ENCODE measurements at regions of chr1 and their contacts with region 1.

Region 1: DNA sequence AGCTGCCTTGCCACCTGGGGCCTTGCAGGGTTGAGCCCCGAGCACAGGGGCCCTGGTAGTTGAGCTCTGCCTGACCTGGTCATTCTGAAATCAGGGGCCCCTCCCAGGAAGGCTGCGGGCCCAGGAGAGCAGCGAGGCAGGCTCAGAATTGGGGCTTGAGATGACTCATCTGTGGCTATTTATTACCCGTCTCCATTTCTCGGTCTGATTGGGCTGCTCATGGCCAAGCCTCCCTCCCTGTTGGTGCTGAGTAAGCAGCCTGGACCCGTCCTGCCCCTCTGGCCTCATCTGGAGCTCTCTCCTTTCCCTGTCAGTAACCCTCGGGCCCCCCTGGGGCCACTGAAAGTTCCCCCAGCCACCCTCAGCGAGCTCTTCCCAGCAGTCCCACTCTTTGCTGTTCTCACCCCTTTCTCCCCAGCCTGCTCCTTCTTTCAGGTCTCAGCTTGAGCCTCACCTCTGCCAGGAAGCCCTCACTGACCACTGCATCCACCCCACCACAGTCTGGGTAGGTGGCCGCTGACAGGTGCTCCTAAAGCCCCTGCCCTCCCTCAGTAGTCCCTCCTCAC is 11.0 kb upstream of the TNFRSF8 start:
- DNase-seq: peak; percentile 45
- ATAC-seq: peak; percentile 84
- H3K4me3 Mint-ChIP-seq: peak overlapping the region; percentile 57
- H3K27ac Mint-ChIP-seq: peak overlapping the region; percentile 77
- H3K4me1 Mint-ChIP-seq: peaks cover 26% of the 10 kb centered on the region
- H3K27me3 Mint-ChIP-seq: no peaks in the 10 kb centered on the region
- CTCF ChIP-seq: no peak

Region 2: DNA sequence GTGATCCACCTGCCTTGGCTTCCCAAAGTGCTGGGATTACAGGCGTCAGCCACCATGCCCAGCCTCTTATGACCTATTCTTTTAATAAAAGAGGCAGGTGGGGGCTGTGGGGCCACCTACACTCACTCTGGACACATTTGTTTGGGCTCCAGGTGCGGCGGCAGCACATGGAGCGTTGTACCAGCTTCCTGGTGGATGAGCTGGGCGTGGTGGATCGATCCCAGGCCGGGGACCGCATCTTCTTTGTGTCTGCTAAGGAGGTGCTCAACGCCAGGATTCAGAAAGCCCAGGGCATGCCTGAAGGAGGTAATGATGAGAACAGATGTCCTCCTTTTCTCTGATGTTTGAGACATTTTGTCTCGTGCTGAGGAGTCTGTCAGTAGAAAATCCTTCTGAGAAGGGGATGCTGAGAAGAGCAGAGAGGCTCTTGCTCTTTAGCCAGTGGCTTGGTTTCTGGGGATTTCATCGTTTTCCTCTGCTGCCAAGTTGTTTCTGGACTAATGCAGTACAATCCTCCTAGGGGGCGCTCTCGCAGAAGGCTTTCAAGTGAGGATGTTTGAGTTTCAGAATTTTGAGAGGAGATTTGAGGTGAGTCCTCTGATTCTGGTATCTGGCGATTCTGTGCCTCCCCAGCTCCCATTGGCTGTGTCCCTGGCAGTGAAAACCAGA is 50.7 kb before region 1 on chr1:
- CTCF ChIA-PET with region 1: no interaction called
- POLR2A ChIA-PET with region 1: interaction called, 4 read pairs
- intact Hi-C with region 1: loop called (anchors 5 kb)
- DNase-seq: no peak
- ATAC-seq: no peak
- H3K4me3 Mint-ChIP-seq: no peak overlapping the region
- H3K27ac Mint-ChIP-seq: no peak overlapping the region
- H3K4me1 Mint-ChIP-seq: peaks cover 11% of the 10 kb centered on the region
- H3K27me3 Mint-ChIP-seq: no peaks in the 10 kb centered on the region
- CTCF ChIP-seq: no peak

Region 3: DNA sequence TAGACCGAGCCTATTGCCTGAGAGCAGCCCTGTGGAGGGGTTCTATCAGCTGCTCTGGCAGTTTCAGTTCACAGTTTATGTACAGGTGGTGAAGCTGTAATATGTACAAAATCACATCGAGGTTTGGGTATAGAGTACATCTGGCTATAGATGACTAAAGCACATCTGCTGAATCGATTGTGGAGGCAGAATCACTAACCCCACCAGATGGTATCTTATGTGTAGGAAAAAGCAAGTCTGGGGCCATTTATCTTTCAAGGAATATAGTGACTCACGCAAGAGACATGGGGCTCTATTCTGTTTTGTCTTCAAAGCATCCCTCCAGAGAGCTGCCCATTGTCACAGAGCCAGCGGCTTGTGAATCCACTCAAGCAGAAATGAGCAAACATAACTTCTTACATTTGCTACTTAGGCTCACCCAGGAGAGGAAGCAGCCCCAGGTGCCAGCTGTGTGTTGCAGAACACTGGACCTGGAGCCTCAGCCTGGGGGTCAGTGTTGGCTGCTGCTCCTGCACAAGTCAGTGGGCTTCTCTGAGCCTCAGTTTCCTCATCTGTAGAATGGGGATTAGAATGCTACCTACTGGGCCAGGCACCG is 11.5 kb before region 1 on chr1:
- CTCF ChIA-PET with region 1: interaction called, 4 read pairs
- POLR2A ChIA-PET with region 1: interaction called, 41 read pairs
- intact Hi-C with region 1: loop called (anchors 1 kb)
- DNase-seq: no peak
- ATAC-seq: peak; percentile 85
- H3K4me3 Mint-ChIP-seq: peak overlapping the region; percentile 73
- H3K27ac Mint-ChIP-seq: peak overlapping the region; percentile 88
- H3K4me1 Mint-ChIP-seq: peaks cover 48% of the 10 kb centered on the region
- H3K27me3 Mint-ChIP-seq: no peaks in the 10 kb centered on the region
- CTCF ChIP-seq: no peak

Region 4: DNA sequence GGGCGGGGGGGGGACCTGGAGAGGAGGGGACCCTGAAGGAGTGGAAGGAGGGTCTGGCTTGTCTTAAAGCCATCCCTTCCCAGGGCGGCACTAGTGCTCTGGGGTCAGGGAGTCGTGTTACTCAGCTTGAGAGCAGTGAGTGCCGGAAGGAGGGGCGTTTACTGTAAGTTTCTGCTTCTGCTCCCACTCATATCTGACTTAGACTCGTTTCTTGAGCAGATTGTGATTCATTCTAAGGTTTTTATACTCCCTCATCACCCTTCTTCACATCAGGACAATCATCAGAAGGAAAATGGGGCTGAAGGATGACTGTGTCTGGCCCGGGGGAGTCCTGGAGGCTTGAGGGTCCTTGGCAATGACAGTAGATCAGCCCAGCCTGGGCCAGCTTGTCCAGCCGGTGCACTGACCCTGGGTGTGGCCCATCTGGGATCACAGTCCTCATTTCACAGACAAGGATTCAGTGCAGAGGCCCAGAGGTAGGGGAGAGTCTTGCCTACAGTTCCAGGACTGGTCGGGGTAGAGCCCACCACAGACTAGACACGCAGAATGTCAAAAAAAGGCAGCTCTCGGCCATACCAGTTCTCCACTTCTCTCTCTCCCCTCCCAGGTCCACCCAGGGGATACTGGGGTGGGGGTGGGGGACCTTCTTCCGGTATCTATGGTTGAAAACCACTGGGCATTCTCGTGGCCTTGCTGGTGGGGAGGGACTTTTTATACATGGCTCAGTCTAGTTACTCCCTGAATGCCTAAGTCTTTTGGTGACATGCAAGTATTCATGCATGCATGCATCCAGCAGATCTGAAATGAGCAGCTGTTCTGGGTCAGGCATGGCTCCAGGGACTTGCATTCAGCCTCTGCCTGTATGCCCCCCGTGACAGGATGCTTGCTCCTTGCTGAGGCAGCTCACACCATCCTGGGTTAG is 16.1 kb after region 1 on chr1:
- CTCF ChIA-PET with region 1: no interaction called
- POLR2A ChIA-PET with region 1: interaction called, 12 read pairs
- intact Hi-C with region 1: no loop called
- DNase-seq: no peak
- ATAC-seq: peak; percentile 48
- H3K4me3 Mint-ChIP-seq: peak overlapping the region; percentile 7
- H3K27ac Mint-ChIP-seq: no peak overlapping the region
- H3K4me1 Mint-ChIP-seq: peaks cover 37% of the 10 kb centered on the region
- H3K27me3 Mint-ChIP-seq: peaks cover 38% of the 10 kb centered on the region
- CTCF ChIP-seq: no peak

Region 5: DNA sequence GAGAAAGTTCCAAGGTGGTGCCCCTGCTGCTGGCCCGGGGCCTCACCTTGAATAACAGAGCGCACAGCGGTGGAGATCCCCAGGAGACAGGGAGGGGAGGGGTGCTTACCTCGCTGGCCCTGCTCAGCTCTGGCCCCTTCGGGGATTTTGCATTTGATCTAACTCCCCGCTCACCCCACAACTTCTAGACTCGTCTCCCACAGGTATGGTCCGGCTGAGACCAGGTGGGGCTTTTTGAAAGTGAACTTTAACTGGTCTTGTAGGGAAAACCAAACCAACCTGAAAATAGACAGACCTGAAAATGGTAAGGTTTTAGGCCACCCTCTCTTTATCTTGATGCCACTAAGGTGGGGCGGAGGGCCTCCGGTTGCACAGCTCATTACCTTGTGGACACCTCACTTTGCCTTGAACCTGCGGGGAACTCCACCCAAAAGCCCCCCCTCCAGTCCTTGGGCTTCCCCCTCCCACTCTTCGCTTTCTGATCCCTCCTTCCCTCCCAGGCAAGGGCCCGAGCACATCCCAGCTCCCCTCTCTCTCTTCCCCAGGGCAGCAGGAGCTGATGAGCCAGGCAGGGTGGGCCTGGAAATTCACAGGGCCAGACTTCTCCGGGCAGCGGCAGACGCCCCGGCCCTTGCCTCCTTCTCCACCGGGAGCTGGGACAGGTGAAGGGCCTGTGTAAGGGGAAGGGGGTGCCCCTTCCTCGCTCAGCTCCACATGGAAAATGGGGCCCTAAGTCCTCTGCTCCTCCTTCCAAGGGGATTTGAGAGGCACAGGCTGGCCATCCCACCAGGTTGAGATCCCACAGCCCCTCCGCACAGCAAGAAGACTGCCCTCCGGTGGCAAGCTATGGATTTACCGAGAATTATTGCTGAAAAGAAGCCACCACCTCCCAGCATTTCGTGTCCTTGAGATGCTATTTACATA is 27.1 kb after region 1 on chr1:
- CTCF ChIA-PET with region 1: interaction called, 15 read pairs
- POLR2A ChIA-PET with region 1: interaction called, 25 read pairs
- intact Hi-C with region 1: loop called (anchors 1 kb)
- DNase-seq: peak; percentile 35
- ATAC-seq: peak; percentile 76
- H3K4me3 Mint-ChIP-seq: peak overlapping the region; percentile 70
- H3K27ac Mint-ChIP-seq: peak overlapping the region; percentile 87
- H3K4me1 Mint-ChIP-seq: peaks cover 38% of the 10 kb centered on the region
- H3K27me3 Mint-ChIP-seq: no peaks in the 10 kb centered on the region
- CTCF ChIP-seq: no peak

Region 6: GRCh38 chr1:12087797-12088314 is 35.8 kb after region 1 on chr1:
- CTCF ChIA-PET with region 1: no interaction called
- POLR2A ChIA-PET with region 1: interaction called, 15 read pairs
- intact Hi-C with region 1: no loop called
- DNase-seq: peak; percentile 45
- ATAC-seq: peak; percentile 88
- H3K4me3 Mint-ChIP-seq: peak overlapping the region; percentile 53
- H3K27ac Mint-ChIP-seq: peak overlapping the region; percentile 95
- H3K4me1 Mint-ChIP-seq: peaks cover 45% of the 10 kb centered on the region
- H3K27me3 Mint-ChIP-seq: no peaks in the 10 kb centered on the region
- CTCF ChIP-seq: no peak